B cell (primary cell): ENCODE measurements at regions of chr10 and their contacts with region 1.

Region 1: GRCh38 chr10:73096449-73097304 is at the start of gene P4HA1:
- DNase-seq: peak; percentile 100
- ATAC-seq: peak; percentile 91
- H3K4me3 ChIP-seq: peak within 1 kb of the TSS; percentile 88 to 98 (median 92)
- H3K4me3 Mint-ChIP-seq: peak within 1 kb of the TSS; percentile 93
- H3K27ac ChIP-seq: peak within 1 kb of the TSS; percentile 93 to 98
- H3K27ac Mint-ChIP-seq: peak within 1 kb of the TSS; percentile 91
- H3K4me1 ChIP-seq: peaks cover 10 to 18% of the 10 kb centered on the region in 2 donors
- H3K4me1 Mint-ChIP-seq: peaks cover 30% of the 10 kb centered on the region
- H3K27me3 ChIP-seq: no peaks in the 10 kb centered on the region
- H3K27me3 Mint-ChIP-seq: no peaks in the 10 kb centered on the region
- CTCF ChIP-seq: peak; percentile 76
- total RNA-seq, gene P4HA1: 19.0 and 21.8 TPM in 2 replicates

Region 2: GRCh38 chr10:73110345-73110849 is 13.7 kb after region 1 on chr10 and contains the start of gene NUDT13:
- CTCF ChIA-PET with region 1: interaction called, 35 read pairs
- POLR2A ChIA-PET with region 1: interaction called, 7 read pairs
- intact Hi-C with region 1: loop called (anchors 1 kb)
- DNase-seq: peak; percentile 80
- ATAC-seq: peak; percentile 93
- H3K4me3 ChIP-seq: peak within 1 kb of the TSS; percentile 50 to 79 (median 71)
- H3K4me3 Mint-ChIP-seq: peak within 1 kb of the TSS; percentile 97
- H3K27ac ChIP-seq: peak within 1 kb of the TSS; percentile 26 to 62
- H3K27ac Mint-ChIP-seq: peak within 1 kb of the TSS; percentile 93
- H3K4me1 ChIP-seq: peaks cover 0 to 9% of the 10 kb centered on the region in 2 donors
- H3K4me1 Mint-ChIP-seq: peaks cover 11% of the 10 kb centered on the region
- H3K27me3 ChIP-seq: no peaks in the 10 kb centered on the region
- H3K27me3 Mint-ChIP-seq: no peaks in the 10 kb centered on the region
- CTCF ChIP-seq: no peak
- total RNA-seq, gene NUDT13: 4.5 TPM in 2 replicates

Region 3: GRCh38 chr10:73159038-73159648 is 62.5 kb after region 1 on chr10:
- CTCF ChIA-PET with region 1: interaction called, 111 read pairs
- POLR2A ChIA-PET with region 1: interaction called, 3 read pairs
- intact Hi-C with region 1: loop called (anchors 1 kb)
- DNase-seq: peak; percentile 73
- ATAC-seq: peak; percentile 60
- H3K4me3 ChIP-seq: no peak overlapping the region
- H3K4me3 Mint-ChIP-seq: no peak overlapping the region
- H3K27ac ChIP-seq: peak overlapping the region in 1 of 2 donors; percentile 30
- H3K27ac Mint-ChIP-seq: no peak overlapping the region
- H3K4me1 ChIP-seq: peaks cover 0 to 3% of the 10 kb centered on the region in 2 donors
- H3K4me1 Mint-ChIP-seq: peaks cover 29% of the 10 kb centered on the region
- H3K27me3 ChIP-seq: no peaks in the 10 kb centered on the region
- H3K27me3 Mint-ChIP-seq: no peaks in the 10 kb centered on the region
- CTCF ChIP-seq: peak; percentile 97

Region 4: DNA sequence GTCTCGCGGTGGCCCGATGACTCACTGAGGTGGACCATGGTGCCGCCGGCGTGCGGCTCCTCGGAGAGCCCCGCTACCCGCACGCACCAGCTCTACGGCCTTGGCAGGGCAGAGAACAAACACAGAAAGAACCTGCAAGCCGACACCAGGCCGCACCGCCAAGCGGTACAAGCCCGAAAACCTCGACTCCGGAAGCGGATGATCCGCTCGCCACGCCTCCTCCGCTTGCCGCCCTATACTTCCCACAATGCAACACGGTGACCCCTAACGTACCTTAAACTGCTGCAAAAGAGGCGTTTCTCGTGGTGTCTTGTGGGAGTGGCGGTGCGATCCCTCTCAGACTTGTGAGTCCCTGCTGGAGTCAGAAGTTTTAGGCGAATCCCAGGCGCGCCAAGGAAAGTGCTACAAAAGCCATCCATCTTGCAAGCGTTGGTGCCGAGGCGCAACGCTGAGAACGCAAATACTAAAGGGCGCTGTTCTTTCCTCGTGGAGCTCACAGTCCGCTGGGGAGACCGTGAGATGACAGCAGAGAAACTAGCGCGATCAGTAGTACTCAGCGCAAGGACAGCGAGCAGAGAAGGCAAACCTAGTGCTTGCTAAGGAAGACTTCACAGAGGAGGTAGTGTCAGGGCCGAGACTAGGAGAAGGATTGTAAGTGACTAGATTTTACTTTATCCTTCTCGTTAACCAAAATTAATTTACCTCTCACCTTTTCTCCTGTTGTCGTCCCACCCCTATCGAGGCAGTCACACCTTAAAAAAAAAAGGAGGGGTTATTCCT is 156.0 kb after region 1 on chr10 and contains the start of gene MRPS16:
- CTCF ChIA-PET with region 1: no interaction called
- POLR2A ChIA-PET with region 1: interaction called, 7 read pairs
- intact Hi-C with region 1: loop called (anchors 2 kb)
- DNase-seq: peak; percentile 95
- ATAC-seq: peak; percentile 90
- H3K4me3 ChIP-seq: peak within 1 kb of the TSS; percentile 76 to 98 (median 90)
- H3K4me3 Mint-ChIP-seq: peak within 1 kb of the TSS; percentile 100
- H3K27ac ChIP-seq: peak within 1 kb of the TSS; percentile 83 to 92
- H3K27ac Mint-ChIP-seq: peak within 1 kb of the TSS; percentile 90
- H3K4me1 ChIP-seq: peaks cover 23 to 28% of the 10 kb centered on the region in 2 donors
- H3K4me1 Mint-ChIP-seq: peaks cover 43% of the 10 kb centered on the region
- H3K27me3 ChIP-seq: no peaks in the 10 kb centered on the region
- H3K27me3 Mint-ChIP-seq: no peaks in the 10 kb centered on the region
- CTCF ChIP-seq: no peak
- total RNA-seq, gene MRPS16: 47.9 and 49.6 TPM in 2 replicates

Region 5: GRCh38 chr10:73413528-73414229 is 317.0 kb after region 1 on chr10 and contains the start of gene ANXA7:
- CTCF ChIA-PET with region 1: no interaction called
- POLR2A ChIA-PET with region 1: interaction called, 4 read pairs
- intact Hi-C with region 1: loop called (anchors 1 kb)
- DNase-seq: peak; percentile 92
- ATAC-seq: peak; percentile 95
- H3K4me3 ChIP-seq: peak within 1 kb of the TSS; percentile 70 to 94 (median 93)
- H3K4me3 Mint-ChIP-seq: peak within 1 kb of the TSS; percentile 96
- H3K27ac ChIP-seq: peak within 1 kb of the TSS; percentile 84 to 97
- H3K27ac Mint-ChIP-seq: peak within 1 kb of the TSS; percentile 96
- H3K4me1 ChIP-seq: peaks cover 15 to 21% of the 10 kb centered on the region in 2 donors
- H3K4me1 Mint-ChIP-seq: peaks cover 50% of the 10 kb centered on the region
- H3K27me3 ChIP-seq: no peaks in the 10 kb centered on the region
- H3K27me3 Mint-ChIP-seq: no peaks in the 10 kb centered on the region
- CTCF ChIP-seq: peak; percentile 37
- total RNA-seq, gene ANXA7: 86.7 and 90.0 TPM in 2 replicates

Region 6: DNA sequence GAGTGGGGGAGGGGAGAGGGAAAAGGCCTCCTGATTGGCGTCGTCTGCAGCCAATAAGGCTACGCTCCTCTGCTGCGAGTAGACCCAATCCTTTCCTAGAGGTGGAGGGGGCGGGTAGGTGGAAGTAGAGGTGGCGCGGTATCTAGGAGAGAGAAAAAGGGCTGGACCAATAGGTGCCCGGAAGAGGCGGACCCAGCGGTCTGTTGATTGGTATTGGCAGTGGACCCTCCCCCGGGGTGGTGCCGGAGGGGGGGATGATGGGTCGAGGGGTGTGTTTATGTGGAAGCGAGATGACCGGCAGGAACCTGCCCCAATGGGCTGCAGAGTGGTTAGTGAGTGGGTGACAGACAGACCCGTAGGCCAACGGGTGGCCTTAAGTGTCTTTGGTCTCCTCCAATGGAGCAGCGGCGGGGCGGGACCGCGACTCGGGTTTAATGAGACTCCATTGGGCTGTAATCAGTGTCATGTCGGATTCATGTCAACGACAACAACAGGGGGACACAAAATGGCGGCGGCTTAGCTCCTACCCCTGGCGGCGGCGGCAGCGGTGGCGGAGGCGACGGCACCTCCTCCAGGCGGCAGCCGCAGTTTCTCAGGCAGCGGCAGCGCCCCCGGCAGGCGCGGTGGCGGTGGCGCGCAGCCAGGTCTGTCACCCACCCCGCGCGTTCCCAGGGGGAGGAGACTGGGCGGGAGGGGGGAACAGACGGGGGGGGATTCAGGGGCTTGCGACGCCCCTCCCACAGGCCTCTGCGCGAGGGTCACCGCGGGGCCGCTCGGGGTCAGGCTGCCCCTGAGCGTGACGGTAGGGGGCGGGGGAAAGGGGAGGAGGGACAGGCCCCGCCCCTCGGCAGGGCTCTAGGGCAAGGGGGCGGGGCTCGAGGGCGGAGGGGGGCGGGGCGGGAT is 1729.7 kb after region 1 on chr10 and contains the start of gene KAT6B:
- CTCF ChIA-PET with region 1: no interaction called
- POLR2A ChIA-PET with region 1: no interaction called
- intact Hi-C with region 1: loop called (anchors 5 kb)
- DNase-seq: peak; percentile 100
- ATAC-seq: peak; percentile 75
- H3K4me3 ChIP-seq: peak within 1 kb of the TSS; percentile 81 to 99 (median 90)
- H3K4me3 Mint-ChIP-seq: peak within 1 kb of the TSS; percentile 93
- H3K27ac ChIP-seq: peak within 1 kb of the TSS; percentile 91 to 99
- H3K27ac Mint-ChIP-seq: peak within 1 kb of the TSS; percentile 97
- H3K4me1 ChIP-seq: peaks cover 30 to 38% of the 10 kb centered on the region in 2 donors
- H3K4me1 Mint-ChIP-seq: peaks cover 42% of the 10 kb centered on the region
- H3K27me3 ChIP-seq: no peaks in the 10 kb centered on the region
- H3K27me3 Mint-ChIP-seq: no peaks in the 10 kb centered on the region
- CTCF ChIP-seq: peak; percentile 39
- total RNA-seq, gene KAT6B: 111 and 119 TPM in 2 replicates